MCF 10A (cell line): ENCODE measurements at regions of chr5 and their contacts with region 1.

Region 1: DNA sequence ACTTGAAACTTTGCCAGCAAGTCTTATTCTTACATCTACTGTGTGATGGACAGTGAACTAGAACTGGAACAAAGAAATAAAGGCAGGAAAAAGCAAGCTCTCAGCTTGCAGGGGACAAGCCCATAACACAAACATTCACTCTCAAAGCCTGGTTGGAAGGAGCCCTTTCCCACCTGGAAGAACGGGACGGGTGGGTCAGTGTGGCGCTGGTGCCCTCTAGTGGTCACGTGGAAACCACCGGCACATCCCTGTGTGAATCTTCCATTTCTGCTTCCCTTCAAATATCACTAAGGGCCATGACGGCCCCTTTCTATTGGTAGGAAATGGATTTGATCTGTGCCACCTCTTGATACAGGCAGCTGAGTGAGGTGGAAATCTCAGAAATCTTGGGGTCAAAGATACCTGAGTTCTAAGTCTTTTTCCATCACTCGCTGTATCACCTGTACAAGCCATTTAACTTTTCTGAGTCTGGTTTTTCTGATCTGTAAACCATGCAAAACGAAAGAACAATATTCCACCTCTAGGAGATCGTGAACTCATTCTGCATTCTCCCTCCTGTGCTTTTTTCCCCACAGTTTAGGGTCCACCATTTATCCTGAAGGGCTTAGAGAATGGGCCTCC is 211.6 kb downstream of the MSX2 start:
- DNase-seq: peak; percentile 69
- H3K4me3 Mint-ChIP-seq: no peak overlapping the region
- H3K27ac Mint-ChIP-seq: no peak overlapping the region
- H3K4me1 Mint-ChIP-seq: no peaks in the 10 kb centered on the region
- H3K27me3 Mint-ChIP-seq: peaks cover 42% of the 10 kb centered on the region
- CTCF ChIP-seq: peak; percentile 99

Region 2: DNA sequence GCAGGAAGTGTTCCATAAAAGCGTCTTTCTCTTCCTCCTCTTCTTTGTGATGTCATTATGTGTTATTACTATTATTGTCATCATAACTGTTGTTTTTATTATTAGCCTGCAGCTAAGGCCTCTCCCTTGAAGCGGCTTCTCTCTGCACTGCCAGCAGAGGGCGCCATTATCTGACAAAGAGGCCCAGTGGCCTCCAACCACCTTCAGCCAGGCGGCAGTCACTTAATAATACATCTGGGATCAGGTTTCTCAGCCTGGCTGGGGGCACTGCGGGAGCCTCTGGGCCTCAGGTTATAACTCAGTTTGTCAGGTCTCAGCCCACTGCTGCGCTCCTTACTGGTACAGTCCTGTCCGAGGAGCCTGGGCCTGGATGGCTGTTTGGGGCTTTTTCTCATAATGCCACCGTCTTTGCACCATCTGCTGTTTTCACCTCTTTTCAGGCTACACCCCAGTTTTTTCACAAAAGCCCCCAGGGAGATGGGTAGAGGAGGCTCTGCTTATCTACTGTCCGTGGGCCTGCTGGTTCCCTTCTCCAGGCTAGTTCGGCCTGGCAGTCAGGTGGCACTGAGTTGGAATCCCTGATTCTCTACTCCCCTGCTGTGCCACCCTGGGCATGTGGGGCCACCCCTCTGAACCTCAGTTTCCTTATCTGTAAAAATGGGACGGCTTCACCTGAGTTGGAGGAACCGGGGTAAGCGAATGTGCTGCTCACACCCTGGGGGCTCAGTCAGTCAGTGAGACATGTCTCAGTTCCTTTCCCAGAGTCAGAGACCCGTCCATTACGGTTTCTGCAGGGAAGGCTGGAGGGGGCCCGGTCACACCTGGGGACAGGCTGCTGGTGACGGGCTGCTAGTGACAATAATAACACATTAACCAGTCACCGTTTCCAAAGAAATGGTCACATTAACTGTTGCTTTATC is 608.4 kb before region 1 on chr5:
- CTCF ChIA-PET with region 1: interaction called, 14 read pairs
- POLR2A ChIA-PET with region 1: no interaction called
- intact Hi-C with region 1: loop called (anchors 1 kb)
- DNase-seq: peak; percentile 88
- H3K4me3 Mint-ChIP-seq: no peak overlapping the region
- H3K27ac Mint-ChIP-seq: peak overlapping the region; percentile 96
- H3K4me1 Mint-ChIP-seq: peaks cover 25% of the 10 kb centered on the region
- H3K27me3 Mint-ChIP-seq: peaks cover 25% of the 10 kb centered on the region
- CTCF ChIP-seq: peak; percentile 98

Region 3: DNA sequence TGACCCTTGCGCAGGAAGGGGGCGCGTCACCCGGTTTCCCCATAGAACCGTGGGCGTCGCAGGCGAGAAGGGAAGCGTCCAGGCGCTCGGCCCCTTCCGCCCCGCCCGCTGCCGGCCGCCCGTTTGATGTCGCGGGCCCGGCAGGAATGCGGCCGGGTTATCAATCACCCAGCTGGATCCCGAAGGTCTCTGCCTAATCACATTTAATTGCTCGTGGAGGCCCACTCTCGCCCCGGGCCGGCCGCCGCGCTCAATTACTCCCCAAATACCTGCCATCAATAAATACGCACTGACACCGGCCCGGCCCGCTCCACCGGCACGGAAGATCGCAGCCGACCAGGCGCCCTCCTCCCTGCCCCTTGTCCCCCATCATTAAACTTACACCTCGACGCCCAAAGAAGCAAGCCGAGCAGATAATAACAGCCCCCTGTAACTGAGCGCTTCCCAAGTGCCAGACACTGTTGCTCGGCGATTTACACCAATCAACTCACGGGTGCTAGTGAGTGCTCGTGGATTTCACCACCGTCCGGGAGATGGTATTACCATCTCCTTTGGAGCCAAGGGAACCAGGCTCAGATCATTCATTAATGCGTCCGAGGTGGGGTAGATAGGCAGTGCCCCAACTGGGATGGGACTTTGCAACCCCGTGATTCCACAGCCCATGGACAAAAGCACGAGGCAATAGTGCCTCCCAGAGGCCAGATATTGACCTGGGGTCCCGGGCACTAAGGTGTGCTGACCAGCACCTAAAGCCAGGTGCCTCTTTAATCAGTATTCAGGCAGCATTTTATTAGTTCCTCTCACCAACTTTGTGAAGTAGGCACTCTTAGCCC is 200.2 kb before region 1 on chr5:
- CTCF ChIA-PET with region 1: interaction called, 5 read pairs
- POLR2A ChIA-PET with region 1: no interaction called
- intact Hi-C with region 1: loop called (anchors 5 kb)
- DNase-seq: peak; percentile 63
- H3K4me3 Mint-ChIP-seq: peak overlapping the region; percentile 65
- H3K27ac Mint-ChIP-seq: no peak overlapping the region
- H3K4me1 Mint-ChIP-seq: peaks cover 20% of the 10 kb centered on the region
- H3K27me3 Mint-ChIP-seq: peaks cover 19% of the 10 kb centered on the region
- CTCF ChIP-seq: peak; percentile 74

Region 4: DNA sequence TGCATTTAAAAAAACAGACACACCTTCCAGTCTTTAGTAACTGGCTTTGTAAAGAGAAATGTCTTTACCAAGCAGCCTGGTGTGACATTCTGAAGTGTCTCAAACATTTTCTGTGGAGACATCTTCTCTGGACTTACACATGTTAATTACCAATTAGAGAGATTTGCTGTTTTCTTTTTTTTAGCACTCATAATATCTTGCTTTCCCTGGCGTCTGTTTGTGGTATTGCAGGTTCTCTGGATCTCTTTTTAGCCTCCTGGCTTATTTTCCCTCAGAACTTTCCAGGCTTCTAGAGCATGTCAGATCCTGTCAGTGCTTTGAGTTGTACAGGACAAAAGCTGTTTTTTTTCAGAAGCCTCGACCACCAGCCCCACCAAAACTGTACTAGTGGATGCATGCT is 119.1 kb before region 1 on chr5:
- CTCF ChIA-PET with region 1: no interaction called
- POLR2A ChIA-PET with region 1: no interaction called
- intact Hi-C with region 1: no loop called
- DNase-seq: peak; percentile 52
- H3K4me3 Mint-ChIP-seq: no peak overlapping the region
- H3K27ac Mint-ChIP-seq: no peak overlapping the region
- H3K4me1 Mint-ChIP-seq: no peaks in the 10 kb centered on the region
- H3K27me3 Mint-ChIP-seq: no peaks in the 10 kb centered on the region
- CTCF ChIP-seq: peak; percentile 60

Region 5: GRCh38 chr5:174837919-174838902 is 97.8 kb before region 1 on chr5:
- CTCF ChIA-PET with region 1: interaction called, 11 read pairs
- POLR2A ChIA-PET with region 1: no interaction called
- intact Hi-C with region 1: loop called (anchors 1 kb)
- DNase-seq: peak; percentile 99
- H3K4me3 Mint-ChIP-seq: no peak overlapping the region
- H3K27ac Mint-ChIP-seq: peak overlapping the region; percentile 65
- H3K4me1 Mint-ChIP-seq: peaks cover 20% of the 10 kb centered on the region
- H3K27me3 Mint-ChIP-seq: no peaks in the 10 kb centered on the region
- CTCF ChIP-seq: peak; percentile 43

Region 6: GRCh38 chr5:174910245-174910737 is 25.7 kb before region 1 on chr5:
- CTCF ChIA-PET with region 1: interaction called, 31 read pairs
- POLR2A ChIA-PET with region 1: interaction called, 3 read pairs
- intact Hi-C with region 1: loop called (anchors 1 kb)
- DNase-seq: peak; percentile 77
- H3K4me3 Mint-ChIP-seq: no peak overlapping the region
- H3K27ac Mint-ChIP-seq: no peak overlapping the region
- H3K4me1 Mint-ChIP-seq: no peaks in the 10 kb centered on the region
- H3K27me3 Mint-ChIP-seq: peaks cover 43% of the 10 kb centered on the region
- CTCF ChIP-seq: peak; percentile 99

Region 7: GRCh38 chr5:174920906-174921550 is 14.9 kb before region 1 on chr5:
- CTCF ChIA-PET with region 1: interaction called, 13 read pairs
- POLR2A ChIA-PET with region 1: no interaction called
- intact Hi-C with region 1: no loop called
- DNase-seq: no peak
- H3K4me3 Mint-ChIP-seq: no peak overlapping the region
- H3K27ac Mint-ChIP-seq: no peak overlapping the region
- H3K4me1 Mint-ChIP-seq: no peaks in the 10 kb centered on the region
- H3K27me3 Mint-ChIP-seq: no peaks in the 10 kb centered on the region
- CTCF ChIP-seq: no peak